Right ventricle myocardium inferior (tissue), 1 donor: ENCODE measurements at regions of chr7 and their contacts with region 1.

Region 1: DNA sequence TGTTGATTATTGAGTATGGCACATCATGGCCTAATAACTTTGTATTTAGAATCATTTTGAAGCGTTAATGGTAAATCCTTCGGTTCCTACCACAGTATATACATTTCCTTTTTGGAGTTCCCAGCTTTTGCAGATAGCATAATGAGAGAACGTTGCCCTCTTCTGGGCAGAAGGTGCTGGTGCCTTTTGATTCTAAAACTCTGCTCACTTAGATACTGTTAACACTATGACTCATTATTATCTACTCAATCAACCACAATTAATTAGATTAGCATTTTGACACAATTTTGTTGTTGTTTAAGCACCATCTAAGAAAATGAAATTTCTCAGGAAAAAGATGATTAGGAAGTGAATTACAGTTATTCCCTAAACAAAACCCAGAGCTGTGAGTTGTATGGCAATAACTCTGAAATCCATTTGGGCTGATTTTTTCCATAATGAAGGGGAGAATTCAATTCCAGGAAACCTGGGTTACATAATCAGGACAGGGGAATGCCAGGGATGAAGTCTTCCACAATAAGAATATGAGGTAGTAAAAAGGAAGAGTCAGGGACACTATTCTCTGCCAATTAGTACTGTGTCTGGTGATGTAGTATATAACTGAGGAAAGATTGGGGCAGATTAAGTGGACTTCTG is 11.5 kb upstream of the DLD start:
- DNase-seq: no peak
- ATAC-seq: peak; percentile 64

Region 2: DNA sequence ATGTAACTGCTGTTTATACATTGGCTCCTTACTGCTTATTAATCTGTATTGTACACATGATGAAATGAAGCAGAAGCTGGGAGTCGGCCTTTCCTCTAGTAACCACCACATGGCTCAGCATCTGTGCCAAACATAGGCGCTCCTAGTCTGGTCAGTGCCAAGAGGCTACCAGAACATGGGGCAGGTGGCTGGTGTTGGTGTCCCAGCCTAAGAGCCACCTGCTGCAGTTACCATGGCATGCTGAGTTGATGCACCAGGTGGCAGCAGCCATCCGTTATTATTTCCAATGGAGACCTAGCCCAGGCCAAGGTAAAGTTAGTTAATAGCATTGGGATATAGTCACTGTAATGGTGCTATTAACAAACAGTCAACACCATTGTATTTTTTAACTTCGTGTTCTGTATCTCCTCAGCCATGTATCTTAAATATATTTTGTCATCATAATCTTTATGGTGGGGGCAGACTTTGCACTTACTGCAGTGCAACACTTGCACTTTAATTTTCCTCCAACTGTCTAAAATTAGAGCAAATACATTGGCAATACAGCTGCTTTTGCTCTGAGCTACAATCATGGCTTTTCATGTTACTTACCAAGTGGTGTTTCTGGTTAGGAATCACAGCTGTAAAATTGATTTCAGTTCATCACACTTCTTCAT is 677.6 kb before region 1 on chr7:
- intact Hi-C with region 1: loop called (anchors 10 kb)
- DNase-seq: no peak
- ATAC-seq: peak; percentile 89

Region 3: DNA sequence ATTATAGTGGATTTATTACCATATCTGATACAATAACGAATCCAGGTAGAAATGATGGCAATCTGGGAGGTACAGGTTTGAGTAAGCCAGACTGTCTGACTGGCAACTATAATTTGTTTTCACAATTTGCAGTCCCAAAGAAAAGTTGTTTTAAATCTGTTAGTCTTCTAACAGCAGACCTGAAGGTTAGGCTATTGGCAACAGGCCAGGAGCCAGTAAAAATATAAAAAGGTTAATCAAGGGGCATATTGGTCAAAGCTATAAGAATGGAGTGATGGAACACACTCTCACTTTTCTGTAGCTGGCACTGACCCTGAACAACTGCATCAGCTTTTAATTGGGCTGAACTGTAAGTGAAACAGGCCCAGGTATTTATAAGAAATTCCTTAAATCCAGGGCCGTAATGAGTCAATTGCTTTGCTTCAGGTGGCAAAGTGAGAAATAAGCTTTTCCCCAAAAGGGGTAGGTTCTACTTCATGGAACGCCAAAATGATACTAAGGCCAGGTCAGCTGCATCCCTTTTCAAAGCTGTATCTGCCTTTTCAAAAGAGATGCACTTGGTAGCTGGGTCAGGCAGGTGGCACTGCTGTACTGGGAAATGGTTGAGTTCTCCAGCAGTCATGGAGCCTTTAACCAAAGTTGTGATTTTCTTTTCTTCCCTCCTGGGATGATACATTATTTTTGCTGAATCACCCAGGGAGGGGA is 416.6 kb before region 1 on chr7:
- intact Hi-C with region 1: loop called (anchors 5 kb)
- DNase-seq: no peak
- ATAC-seq: peak; percentile 87

Region 4: GRCh38 chr7:107743567-107744344 is 135.8 kb before region 1 on chr7 and contains the start of gene CBLL1:
- intact Hi-C with region 1: loop called (anchors 2 kb)
- DNase-seq: peak; percentile 99
- ATAC-seq: peak; percentile 99
- total RNA-seq, gene CBLL1: 20.5 TPM

Region 5: DNA sequence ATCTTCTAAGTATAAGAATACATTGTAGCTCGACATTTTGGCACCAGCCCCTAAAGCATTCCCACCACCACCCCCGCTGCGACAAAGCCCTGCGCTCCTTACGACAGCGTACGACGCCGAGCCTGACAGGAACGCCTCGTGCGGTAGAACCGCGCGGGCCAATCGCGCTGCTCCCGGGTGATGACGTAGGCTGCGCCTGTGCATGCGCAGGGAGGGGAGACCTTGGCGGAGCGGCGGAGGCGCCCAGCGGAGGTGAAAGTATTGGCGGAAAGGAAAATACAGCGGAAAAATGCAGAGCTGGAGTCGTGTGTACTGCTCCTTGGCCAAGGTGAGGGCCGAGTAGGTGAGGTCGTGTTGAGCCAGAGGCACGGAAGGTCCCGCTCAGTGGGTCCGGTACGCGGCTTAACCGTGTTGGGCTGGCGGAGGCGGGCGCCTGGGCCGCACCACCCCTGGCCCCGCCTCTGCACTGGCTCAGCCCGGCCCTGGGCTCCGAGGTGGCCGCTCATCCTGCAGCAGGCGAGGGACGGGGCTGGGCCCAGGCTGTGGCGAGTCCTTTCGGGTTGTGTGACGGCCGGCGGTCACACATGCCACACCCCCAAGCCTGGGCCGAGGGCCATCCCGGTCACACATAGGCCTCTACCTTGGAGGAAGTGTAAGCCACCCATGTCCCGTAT is 11.6 kb after region 1 on chr7 and contains the start of gene DLD:
- intact Hi-C with region 1: no loop called
- DNase-seq: peak; percentile 99
- ATAC-seq: peak; percentile 99
- total RNA-seq, gene DLD: 288 TPM

Region 6: DNA sequence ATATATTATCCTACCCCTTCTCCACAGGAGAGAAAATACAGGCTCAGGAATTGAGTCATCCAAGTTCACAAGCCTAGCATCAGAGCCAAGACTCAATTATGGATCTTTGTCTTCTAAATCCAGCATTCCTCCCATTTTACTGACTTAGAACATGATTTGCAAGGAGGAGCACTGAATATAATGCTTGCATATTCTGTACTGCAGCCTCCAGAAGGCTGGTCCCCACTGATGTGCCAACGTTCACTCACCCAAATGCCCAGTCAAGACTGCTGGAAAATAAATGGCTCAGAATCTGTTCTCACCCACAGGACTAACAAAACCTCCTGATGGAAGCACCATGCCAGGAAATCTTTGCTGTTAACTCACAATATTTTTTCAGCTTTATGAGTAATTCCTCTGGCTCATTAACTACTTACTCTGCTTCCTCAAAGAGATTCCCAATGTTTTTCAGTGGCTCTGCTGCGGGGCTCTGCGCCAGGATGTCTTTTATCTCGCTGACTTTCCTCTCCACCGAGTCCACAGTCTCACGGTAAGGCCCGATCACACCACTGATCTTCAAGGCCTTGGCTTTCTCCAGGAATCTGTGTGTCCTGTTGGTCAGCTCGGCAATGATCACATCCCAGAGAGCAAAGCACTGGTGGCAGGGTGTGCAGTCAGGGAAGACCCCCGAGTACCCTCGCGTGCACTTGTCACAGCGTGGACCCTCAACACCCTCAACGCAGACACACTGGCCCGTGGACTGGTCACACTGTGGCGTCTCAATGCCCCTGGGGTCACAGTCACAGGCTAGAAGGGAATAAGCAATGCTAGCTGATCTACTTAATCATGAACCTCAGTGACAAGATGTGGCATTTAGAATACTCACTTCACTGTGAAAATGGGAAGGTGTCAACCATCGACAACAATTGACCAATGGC is 60.3 kb after region 1 on chr7:
- intact Hi-C with region 1: no loop called
- DNase-seq: peak; percentile 80
- ATAC-seq: peak; percentile 56